K562 (cell line): ENCODE measurements at regions of chr22 and their contacts with region 1.

Region 1: GRCh38 chr22:22138915-22139314 is 105.7 kb upstream of the VPREB1 start:
- DNase-seq: no peak
- ATAC-seq: no peak
- H3K4me3 ChIP-seq: no peak overlapping the region
- H3K27ac ChIP-seq: no peak overlapping the region
- H3K4me1 ChIP-seq: peaks cover 0 to 11% of the 10 kb centered on the region in 2 experiments; a peak in 2 of 5 replicates
- H3K27me3 ChIP-seq: peaks cover 0 to 23% of the 10 kb centered on the region in 2 experiments; a peak in 3 of 5 replicates
- CTCF ChIP-seq: no peak
- EP300 ChIP-seq: no peak
- POLR2A ChIP-seq: no peak
- RAD21 ChIP-seq: no peak

Region 2: GRCh38 chr22:22068025-22068424 is 70.9 kb before region 1 on chr22:
- CTCF ChIA-PET with region 1: no interaction called
- POLR2A ChIA-PET with region 1: no interaction called
- in situ Hi-C with region 1: no loop called
- intact Hi-C with region 1: no loop called
- DNase-seq: no peak
- ATAC-seq: no peak
- H3K4me3 ChIP-seq: no peak overlapping the region
- H3K27ac ChIP-seq: no peak overlapping the region
- H3K4me1 ChIP-seq: peaks cover 0 to 2% of the 10 kb centered on the region in 2 experiments; a peak in 1 of 5 replicates
- H3K27me3 ChIP-seq: peaks cover 34 to 37% of the 10 kb centered on the region in 2 experiments
- CTCF ChIP-seq: no peak
- EP300 ChIP-seq: no peak
- POLR2A ChIP-seq: no peak
- RAD21 ChIP-seq: no peak

Region 3: GRCh38 chr22:22123118-22123959 is 15.6 kb before region 1 on chr22:
- CTCF ChIA-PET with region 1: no interaction called
- POLR2A ChIA-PET with region 1: interaction called, 67 read pairs
- in situ Hi-C with region 1: no loop called
- intact Hi-C with region 1: no loop called
- DNase-seq: peak in 1 of 4 experiments; percentile 38
- ATAC-seq: peak; percentile 51
- H3K4me3 ChIP-seq: no peak overlapping the region
- H3K27ac ChIP-seq: no peak overlapping the region
- H3K4me1 ChIP-seq: peaks cover 0 to 18% of the 10 kb centered on the region in 2 experiments; a peak in 1 of 5 replicates
- H3K27me3 ChIP-seq: peaks cover 35 to 36% of the 10 kb centered on the region in 2 experiments
- CTCF ChIP-seq: no peak
- EP300 ChIP-seq: no peak
- POLR2A ChIP-seq: no peak
- RAD21 ChIP-seq: no peak

Region 4: GRCh38 chr22:22151308-22151707 is 12.4 kb after region 1 on chr22:
- CTCF ChIA-PET with region 1: no interaction called
- POLR2A ChIA-PET with region 1: interaction called, 81 read pairs
- in situ Hi-C with region 1: no loop called
- intact Hi-C with region 1: no loop called
- DNase-seq: no peak
- ATAC-seq: no peak
- H3K4me3 ChIP-seq: no peak overlapping the region
- H3K27ac ChIP-seq: no peak overlapping the region
- H3K4me1 ChIP-seq: no peaks in the 10 kb centered on the region
- H3K27me3 ChIP-seq: peaks cover 15 to 35% of the 10 kb centered on the region in 2 experiments
- CTCF ChIP-seq: no peak
- EP300 ChIP-seq: no peak
- POLR2A ChIP-seq: no peak
- RAD21 ChIP-seq: no peak

Region 5: GRCh38 chr22:22161924-22162851 is 23.3 kb after region 1 on chr22:
- CTCF ChIA-PET with region 1: interaction called, 3 read pairs
- POLR2A ChIA-PET with region 1: interaction called, 11 read pairs
- in situ Hi-C with region 1: no loop called
- intact Hi-C with region 1: no loop called
- DNase-seq: peak in 2 of 4 experiments; percentile 38 to 48
- ATAC-seq: peak; percentile 61
- H3K4me3 ChIP-seq: no peak overlapping the region
- H3K27ac ChIP-seq: no peak overlapping the region
- H3K4me1 ChIP-seq: no peaks in the 10 kb centered on the region
- H3K27me3 ChIP-seq: peaks cover 0 to 28% of the 10 kb centered on the region in 2 experiments; a peak in 2 of 5 replicates
- CTCF ChIP-seq: no peak
- EP300 ChIP-seq: no peak
- POLR2A ChIP-seq: no peak
- RAD21 ChIP-seq: no peak

Region 6: GRCh38 chr22:22410677-22411076 is 271.8 kb after region 1 on chr22:
- CTCF ChIA-PET with region 1: no interaction called
- POLR2A ChIA-PET with region 1: no interaction called
- in situ Hi-C with region 1: no loop called
- intact Hi-C with region 1: no loop called
- DNase-seq: peak in 2 of 4 experiments; percentile 33 to 34
- ATAC-seq: no peak
- H3K4me3 ChIP-seq: no peak overlapping the region
- H3K27ac ChIP-seq: no peak overlapping the region
- H3K4me1 ChIP-seq: no peaks in the 10 kb centered on the region
- H3K27me3 ChIP-seq: peaks cover 14 to 46% of the 10 kb centered on the region in 2 experiments; a peak in 4 of 5 replicates
- CTCF ChIP-seq: no peak
- EP300 ChIP-seq: no peak
- POLR2A ChIP-seq: no peak
- RAD21 ChIP-seq: no peak